Posterior vena cava (tissue), 2 donors: ENCODE measurements at regions of chr6 and their contacts with region 1.

Region 1: DNA sequence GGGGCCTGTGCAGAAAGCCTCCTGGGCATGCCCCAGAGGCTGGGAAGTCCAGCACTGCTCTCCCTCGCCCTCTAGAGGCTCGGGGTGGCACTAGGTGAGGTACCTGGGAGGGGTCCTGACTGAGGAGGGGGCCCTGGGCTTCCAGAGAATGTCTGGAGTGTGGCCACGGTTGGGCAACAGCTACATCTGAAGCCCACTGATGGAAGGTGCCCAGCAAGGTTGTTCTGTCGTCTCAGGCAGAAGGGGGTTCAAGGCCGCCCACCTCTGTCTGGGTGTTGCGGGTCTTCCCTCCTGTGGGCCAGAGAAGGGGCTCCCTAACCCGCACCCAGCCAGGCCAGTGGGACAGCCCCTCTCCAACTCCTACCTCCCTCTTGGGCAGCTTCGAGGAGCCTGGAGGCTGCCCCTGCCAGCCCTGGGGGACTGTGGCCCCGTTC is 11.4 kb upstream of the VEGFA start:
- DNase-seq: peak; percentile 83

Region 2: GRCh38 chr6:42652024-42652746 is 1106.4 kb before region 1 on chr6:
- intact Hi-C with region 1: loop called in 1 of 2 experiments (anchors 5 kb)
- DNase-seq: no peak

Region 3: DNA sequence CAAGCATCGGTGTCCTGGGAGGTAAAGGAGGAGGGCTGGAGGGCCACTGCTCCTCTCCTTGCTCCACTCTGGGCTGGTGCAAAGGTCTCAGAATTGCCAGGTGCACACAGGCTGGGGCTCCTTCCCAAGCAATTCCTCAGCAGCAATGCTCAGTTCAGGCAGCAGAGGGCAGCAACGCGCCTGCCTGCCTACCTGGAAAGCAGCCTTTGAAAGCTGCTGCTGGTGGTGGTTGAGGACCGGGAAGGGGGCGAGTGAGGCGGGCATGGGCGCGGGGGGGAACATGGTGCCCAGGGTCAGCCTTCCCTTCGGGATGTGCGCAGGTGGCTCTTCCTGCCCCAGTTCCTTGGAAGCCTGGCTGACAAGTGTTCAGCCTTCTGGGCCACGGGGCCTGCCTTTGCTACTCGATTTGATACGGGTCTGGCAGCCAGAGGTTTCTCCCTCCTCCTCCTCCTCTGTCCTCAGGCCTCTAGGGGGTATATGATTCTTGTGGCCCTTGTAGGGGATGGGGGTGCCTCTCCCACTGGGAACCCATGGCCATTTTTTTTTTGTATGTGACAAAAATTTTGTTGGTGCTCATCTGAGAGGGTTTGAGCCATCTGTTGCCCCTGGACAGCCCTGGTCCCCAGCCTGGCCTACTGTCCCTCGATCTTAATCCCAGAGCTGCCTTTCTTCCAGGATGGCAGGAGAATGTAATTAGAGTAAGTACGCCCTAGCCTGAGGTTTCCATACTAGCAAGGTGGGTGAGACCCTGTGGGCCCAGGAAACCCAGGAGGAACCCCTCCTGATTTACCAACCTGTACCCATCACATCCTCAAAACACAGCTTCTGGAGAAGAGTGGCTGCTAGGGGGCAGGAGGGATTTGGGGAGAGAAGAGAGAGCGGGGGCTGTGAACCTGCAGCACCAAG is 91.1 kb before region 1 on chr6:
- intact Hi-C with region 1: loop called in 1 of 2 experiments (anchors 5 kb)
- DNase-seq: peak; percentile 93

Region 4: GRCh38 chr6:43723737-43724295 is 34.8 kb before region 1 on chr6:
- intact Hi-C with region 1: loop called (anchors 1 to 5 kb)
- DNase-seq: peak; percentile 81